OCI-LY7 (cell line): ENCODE measurements at regions of chr1 and their contacts with region 1.

Region 1: DNA sequence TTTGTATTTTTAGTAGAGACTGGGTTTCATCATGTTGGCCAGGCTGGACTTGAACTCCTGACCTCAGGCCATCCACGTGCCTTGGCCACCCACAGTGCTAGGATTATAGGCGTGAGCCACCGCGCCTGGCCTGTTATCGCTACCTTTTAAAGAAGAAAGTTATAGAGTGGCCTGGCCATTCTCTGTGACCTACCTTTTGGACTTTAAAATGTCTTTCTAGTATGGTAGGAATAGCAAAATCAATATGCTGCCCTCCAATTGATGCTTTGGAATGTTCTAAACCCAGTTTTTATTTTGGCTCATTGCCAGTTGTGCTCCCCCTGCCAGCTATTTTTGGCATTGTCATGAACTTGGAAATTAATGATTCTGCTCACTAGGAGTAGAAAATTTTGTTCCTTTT is 19.9 kb downstream of the HIPK1 start:
- DNase-seq: no peak
- H3K4me3 ChIP-seq: no peak overlapping the region
- H3K27ac ChIP-seq: no peak overlapping the region
- H3K4me1 ChIP-seq: peaks cover 48% of the 10 kb centered on the region
- CTCF ChIP-seq: peak; percentile 46

Region 2: GRCh38 chr1:112955781-112956543 is 993.0 kb before region 1 on chr1 and contains the start of gene SLC16A1:
- CTCF ChIA-PET with region 1: no interaction called
- POLR2A ChIA-PET with region 1: no interaction called
- intact Hi-C with region 1: loop called (anchors 10 kb)
- DNase-seq: peak; percentile 94
- H3K4me3 ChIP-seq: peak within 1 kb of the TSS; percentile 88
- H3K27ac ChIP-seq: peak within 1 kb of the TSS; percentile 87
- H3K4me1 ChIP-seq: peaks cover 45% of the 10 kb centered on the region
- CTCF ChIP-seq: peak; percentile 35; the same call in 1 of the 2 replicates
- total RNA-seq, gene SLC16A1: 50.9 and 56.1 TPM in 2 replicates

Region 3: GRCh38 chr1:113811888-113812660 is 136.9 kb before region 1 on chr1 and contains the start of gene RSBN1:
- CTCF ChIA-PET with region 1: no interaction called
- POLR2A ChIA-PET with region 1: no interaction called
- intact Hi-C with region 1: loop called (anchors 2 kb)
- DNase-seq: peak; percentile 99
- H3K4me3 ChIP-seq: peak within 1 kb of the TSS; percentile 84
- H3K27ac ChIP-seq: peak within 1 kb of the TSS; percentile 93
- H3K4me1 ChIP-seq: peaks cover 30% of the 10 kb centered on the region
- CTCF ChIP-seq: no peak
- total RNA-seq, gene RSBN1: 10.8 and 12.5 TPM in 2 replicates

Region 4: DNA sequence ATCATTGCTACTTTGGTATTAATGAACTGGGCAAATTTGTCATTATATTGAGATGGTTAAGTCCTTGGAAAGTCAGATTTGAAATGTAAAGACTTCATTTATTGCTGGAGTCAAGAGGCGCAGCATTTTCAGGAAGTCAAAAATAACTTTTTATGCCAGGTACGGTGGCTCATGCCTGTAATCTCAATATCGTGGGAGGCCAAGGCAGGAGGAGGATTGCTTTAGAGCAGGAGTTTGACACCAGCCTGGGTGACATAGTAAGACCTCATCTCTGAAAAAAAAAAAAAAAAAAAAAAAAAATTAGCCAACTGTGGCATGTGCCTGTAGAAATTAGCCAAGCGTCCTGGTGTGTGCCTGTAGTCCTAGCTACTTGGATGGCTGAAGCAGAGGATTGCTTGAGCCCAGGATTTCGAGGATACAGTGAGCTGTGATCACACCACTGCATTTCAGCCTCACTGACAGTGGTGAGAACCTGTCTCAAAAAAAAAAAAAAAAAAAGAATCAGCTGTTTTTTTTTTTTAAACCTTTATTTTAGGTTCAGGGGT is 14.4 kb before region 1 on chr1:
- CTCF ChIA-PET with region 1: interaction called, 3 read pairs
- POLR2A ChIA-PET with region 1: interaction called, 29 read pairs
- intact Hi-C with region 1: loop called (anchors 1 kb)
- DNase-seq: no peak
- H3K4me3 ChIP-seq: no peak overlapping the region
- H3K27ac ChIP-seq: no peak overlapping the region
- H3K4me1 ChIP-seq: peaks cover 75% of the 10 kb centered on the region
- CTCF ChIP-seq: no peak

Region 5: DNA sequence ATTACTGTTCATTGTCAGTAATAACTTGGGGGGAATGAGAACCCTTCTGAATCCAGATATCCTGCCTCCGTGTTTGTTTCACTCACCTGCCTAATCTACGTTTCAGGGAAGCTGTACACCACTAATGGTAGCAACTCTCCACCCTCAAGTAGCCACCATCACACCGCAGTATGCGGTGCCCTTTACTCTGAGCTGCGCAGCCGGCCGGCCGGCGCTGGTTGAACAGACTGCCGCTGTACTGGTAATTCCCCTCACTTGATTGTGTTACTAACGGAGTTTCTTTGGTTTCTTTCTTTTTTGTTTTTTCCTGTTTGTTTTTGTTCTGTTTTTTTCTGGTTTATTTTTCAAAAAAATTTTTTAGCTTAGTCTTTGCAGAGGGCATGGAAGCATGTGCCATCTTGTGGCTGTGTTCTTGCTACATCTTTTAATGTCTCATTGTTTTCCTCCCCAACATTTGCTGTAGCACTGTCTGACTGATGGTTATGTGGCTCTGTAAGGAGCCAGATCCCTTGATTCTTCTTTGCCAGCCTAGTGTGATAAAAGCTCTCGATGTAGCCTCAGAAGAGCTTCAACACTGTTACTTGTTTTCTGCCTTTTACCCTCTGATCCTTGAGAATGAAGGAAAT is 14.4 kb after region 1 on chr1:
- CTCF ChIA-PET with region 1: no interaction called
- POLR2A ChIA-PET with region 1: interaction called, 13 read pairs
- intact Hi-C with region 1: no loop called
- DNase-seq: peak; percentile 31
- H3K4me3 ChIP-seq: no peak overlapping the region
- H3K27ac ChIP-seq: no peak overlapping the region
- H3K4me1 ChIP-seq: no peaks in the 10 kb centered on the region
- CTCF ChIP-seq: peak; percentile 66

Region 6: GRCh38 chr1:114024049-114024448 is 75.0 kb after region 1 on chr1:
- CTCF ChIA-PET with region 1: no interaction called
- POLR2A ChIA-PET with region 1: no interaction called
- intact Hi-C with region 1: no loop called
- DNase-seq: no peak
- H3K4me3 ChIP-seq: no peak overlapping the region
- H3K27ac ChIP-seq: no peak overlapping the region
- H3K4me1 ChIP-seq: peaks cover 4% of the 10 kb centered on the region
- CTCF ChIP-seq: no peak

Region 7: DNA sequence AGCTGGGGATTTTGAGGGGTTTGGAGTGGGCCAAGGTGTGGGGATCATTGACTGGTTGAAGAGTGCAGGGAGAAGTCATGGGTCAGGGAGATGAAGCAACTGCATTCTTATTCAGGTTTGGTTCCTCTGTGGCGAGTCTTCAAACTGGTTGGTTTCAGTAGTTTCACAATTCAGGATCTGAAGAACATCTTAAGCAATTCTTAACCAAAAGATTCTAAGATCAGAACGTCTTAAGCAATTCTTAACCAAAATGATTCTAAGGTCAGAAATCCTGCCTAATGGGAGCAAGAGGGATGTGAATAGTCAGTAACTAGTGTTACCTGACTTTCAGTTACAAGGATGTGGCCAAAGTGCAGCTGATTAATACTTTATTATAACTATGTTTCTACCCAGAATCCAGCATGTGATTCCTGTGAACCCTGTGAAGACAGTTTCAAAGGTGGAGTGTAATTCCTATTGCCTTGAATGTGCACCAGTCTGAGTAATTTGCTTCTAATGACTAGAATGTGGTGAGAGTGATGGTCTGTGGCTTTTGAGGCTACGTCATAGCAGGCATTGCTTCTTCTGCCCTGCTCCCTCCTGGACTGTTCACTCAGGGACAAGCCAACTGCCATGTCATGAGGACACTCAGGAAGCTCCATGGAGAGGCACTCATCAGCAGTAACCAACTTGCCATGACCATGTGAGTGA is 91.5 kb after region 1 on chr1:
- CTCF ChIA-PET with region 1: no interaction called
- POLR2A ChIA-PET with region 1: no interaction called
- intact Hi-C with region 1: no loop called
- DNase-seq: no peak
- H3K4me3 ChIP-seq: no peak overlapping the region
- H3K27ac ChIP-seq: no peak overlapping the region
- H3K4me1 ChIP-seq: no peaks in the 10 kb centered on the region
- CTCF ChIP-seq: no peak

Region 8: DNA sequence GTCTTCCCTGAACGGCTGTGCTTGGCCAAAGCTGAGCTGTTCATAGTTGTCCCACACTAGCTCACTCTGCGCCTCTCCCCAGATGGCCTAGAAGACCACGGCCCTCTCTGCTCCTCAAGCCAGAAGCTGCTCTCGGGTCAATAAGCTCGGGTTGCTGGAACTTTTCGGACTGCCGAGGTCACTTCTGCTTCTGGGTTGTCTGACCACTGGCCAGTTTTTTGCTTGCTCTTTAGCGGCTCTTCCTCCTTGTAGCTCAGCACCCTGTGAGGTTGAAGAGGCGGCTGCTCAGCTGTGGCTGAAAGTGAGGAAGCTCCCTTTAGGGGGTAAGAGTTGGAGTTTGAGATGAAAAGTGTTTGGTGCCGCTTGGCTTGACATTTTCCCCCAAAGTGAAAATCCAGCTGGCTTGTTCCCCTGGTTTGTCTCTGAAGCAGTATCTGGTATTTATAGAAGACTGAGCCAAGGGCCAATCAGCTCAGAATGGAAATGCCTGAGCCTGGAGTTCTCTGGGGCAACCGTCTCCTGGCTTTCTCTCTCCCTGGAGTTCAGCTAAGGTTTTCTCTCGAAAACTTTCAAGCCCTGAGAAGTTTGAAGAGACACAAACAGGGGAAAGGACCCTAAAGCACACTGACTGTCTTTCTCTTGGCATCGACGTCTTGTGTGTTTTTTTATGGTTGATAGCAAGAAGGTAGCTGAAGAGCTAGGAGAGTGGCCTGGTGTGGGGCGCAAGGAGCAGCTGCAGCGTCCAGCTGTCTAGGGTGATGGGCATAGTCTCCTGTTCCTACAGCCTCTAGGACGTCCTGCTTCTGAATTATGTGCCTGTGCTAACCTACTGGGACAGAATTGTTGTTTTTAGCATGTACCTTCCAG is 132.7 kb after region 1 on chr1:
- CTCF ChIA-PET with region 1: no interaction called
- POLR2A ChIA-PET with region 1: no interaction called
- intact Hi-C with region 1: no loop called
- DNase-seq: no peak
- H3K4me3 ChIP-seq: no peak overlapping the region
- H3K27ac ChIP-seq: no peak overlapping the region
- H3K4me1 ChIP-seq: no peaks in the 10 kb centered on the region
- CTCF ChIP-seq: no peak

Region 9: DNA sequence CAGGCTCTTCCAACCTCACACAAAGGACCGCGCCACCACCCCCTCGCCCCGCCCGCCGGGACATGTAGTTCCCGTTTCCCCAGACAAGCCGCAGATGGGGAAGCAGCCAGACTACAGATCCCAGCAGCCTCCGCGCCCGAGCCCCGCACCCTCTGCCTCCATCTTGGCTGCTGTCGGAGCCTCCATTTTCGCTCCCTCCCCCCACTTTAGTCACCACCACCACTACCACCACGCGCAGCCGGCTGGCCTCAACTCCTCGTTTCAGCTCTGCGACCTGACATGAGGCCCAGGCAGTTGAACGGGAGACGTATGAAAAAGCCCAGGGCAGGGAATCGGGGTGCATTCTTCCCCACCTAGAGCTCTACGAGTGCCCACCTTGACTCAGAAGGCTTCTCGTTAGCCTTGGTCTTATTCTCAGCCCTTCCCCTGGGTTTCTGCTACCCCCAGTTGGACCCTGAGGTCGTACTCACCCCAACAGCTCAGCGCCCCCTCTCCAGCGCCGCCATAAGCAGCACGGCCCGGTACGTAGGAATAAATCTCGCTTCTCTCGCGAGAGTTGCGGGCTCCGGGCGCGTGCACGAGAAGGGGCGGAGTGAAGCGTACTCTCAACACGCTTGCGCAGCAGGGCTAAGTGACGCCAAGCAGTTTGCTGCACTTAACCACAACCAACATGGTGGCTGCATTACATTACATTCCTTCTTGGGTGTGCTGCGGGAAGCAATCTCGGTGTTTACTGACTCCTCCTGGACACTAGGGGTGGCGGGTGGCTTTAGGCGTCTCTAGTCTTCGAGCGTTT is 808.6 kb after region 1 on chr1 and contains the start of gene CSDE1:
- CTCF ChIA-PET with region 1: no interaction called
- POLR2A ChIA-PET with region 1: no interaction called
- intact Hi-C with region 1: loop called (anchors 10 kb)
- DNase-seq: peak; percentile 99
- H3K4me3 ChIP-seq: peak within 1 kb of the TSS; percentile 90
- H3K27ac ChIP-seq: peak within 1 kb of the TSS; percentile 84
- H3K4me1 ChIP-seq: peaks cover 40% of the 10 kb centered on the region
- CTCF ChIP-seq: peak; percentile 69
- total RNA-seq, gene CSDE1: 177 and 223 TPM in 2 replicates